Dendritic cell treated with granulocyte-macrophage colony-stimulating factor and Interleukin-4, amounts not matched to agents 40 ng/mL and 50 ng/mL, for 4 days (primary cell): ENCODE measurements at regions of chr7 and their contacts with region 1.

Region 1: DNA sequence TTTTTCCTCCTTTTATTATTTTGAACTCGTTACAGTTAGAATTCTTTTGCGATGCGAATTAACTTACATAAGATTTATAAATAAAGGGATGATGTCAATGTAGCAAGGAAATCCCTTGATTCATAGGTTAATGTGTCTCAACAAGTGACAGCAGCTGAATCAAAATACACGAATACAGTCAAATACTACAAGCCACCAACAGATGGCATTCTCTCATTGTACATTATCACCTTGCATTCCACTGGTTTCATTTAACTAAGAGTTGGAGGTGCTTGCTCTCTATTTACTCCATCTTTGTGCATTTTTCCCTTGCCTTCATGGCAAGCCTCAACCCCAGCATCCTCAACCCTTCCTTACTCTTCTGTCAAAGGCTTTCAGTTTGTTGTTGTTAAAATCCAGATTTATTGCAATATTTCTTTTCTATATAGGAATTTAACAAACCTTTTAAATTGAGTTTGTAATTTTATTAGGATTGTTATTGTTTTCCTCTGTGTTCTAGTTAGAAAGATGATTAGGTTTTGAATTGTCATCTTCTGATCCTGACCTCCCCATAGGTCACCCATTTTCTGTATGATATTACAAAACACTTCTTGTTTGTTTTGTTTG is 78.3 kb downstream of the SLC25A40 start:
- H3K4me3 Mint-ChIP-seq: no peak overlapping the region
- H3K27ac Mint-ChIP-seq: no peak overlapping the region
- H3K4me1 Mint-ChIP-seq: no peaks in the 10 kb centered on the region
- H3K27me3 Mint-ChIP-seq: no peaks in the 10 kb centered on the region

Region 2: DNA sequence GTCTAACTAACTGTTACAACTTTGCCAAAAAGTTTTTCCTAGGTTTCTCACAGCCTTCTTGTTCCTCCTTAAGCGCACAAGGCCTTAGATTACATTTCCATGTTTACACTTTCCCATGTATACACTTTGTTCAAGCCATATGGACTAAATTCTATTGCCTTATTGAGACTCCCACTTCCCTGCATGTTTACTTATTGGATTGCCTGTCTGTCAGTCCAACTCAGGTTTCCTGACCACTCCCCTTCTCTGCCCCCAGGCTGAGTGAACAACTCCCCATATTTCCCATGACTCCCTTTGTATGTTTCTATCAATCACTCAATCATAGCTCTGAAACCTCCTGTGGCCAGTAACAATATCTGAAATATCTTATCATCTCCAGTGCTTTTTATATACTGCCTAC is 35.2 kb after region 1 on chr7:
- intact Hi-C with region 1: no loop called
- H3K4me3 Mint-ChIP-seq: no peak overlapping the region
- H3K27ac Mint-ChIP-seq: no peak overlapping the region
- H3K4me1 Mint-ChIP-seq: no peaks in the 10 kb centered on the region
- H3K27me3 Mint-ChIP-seq: no peaks in the 10 kb centered on the region

Region 3: DNA sequence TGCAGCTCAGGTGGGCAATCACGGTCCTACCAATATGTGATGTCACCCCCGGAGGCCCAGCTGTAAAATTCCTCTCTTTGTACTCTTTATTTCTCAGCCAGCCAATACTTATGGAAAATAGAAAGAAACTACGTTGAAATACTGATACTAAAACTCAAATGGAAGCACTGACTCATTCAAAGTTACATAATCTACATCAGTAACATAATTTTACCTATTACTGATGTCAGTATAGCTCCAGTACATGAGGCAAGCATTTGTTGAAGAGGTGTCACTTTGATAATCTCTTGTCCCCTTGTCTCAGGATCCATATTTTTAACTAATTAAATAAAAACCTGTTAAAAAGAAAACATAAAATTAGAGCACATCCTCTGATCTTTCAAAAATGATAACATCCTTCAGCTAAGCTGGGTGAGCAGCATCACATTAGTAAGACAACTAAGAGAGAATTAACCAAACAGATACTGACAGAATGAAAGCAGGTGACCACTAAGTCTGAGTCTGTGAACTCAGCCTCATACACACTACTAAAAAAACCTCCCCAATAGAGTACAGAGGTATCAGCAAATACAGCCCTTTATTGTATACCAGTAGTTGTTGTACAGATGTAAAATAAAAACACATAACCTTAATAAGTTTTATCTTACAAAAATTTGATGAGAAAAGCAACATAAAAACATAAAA is 60.7 kb after region 1 on chr7:
- intact Hi-C with region 1: no loop called
- H3K4me3 Mint-ChIP-seq: no peak overlapping the region
- H3K27ac Mint-ChIP-seq: peak overlapping the region; percentile 43
- H3K4me1 Mint-ChIP-seq: peaks cover 35% of the 10 kb centered on the region
- H3K27me3 Mint-ChIP-seq: no peaks in the 10 kb centered on the region

Region 4: DNA sequence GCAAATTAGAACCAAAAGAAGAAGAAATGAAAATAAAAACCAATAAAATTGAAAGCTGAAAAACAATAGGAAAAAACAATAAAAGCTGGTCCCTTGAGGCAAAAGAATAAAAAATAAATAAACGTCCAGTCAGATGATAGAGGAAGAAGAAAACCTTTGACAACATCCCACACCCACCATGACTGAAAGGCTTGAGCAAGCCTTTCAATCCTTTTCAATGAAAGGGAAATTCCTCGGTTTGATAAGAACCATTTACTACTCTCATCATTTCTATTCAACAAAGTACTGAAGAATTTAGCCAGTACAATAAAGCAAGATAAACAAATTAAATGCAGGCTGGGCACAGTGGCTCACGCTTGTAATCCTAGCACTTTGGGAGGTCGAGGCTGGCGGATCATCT is 74.4 kb after region 1 on chr7:
- intact Hi-C with region 1: no loop called
- H3K4me3 Mint-ChIP-seq: no peak overlapping the region
- H3K27ac Mint-ChIP-seq: peak overlapping the region; percentile 100
- H3K4me1 Mint-ChIP-seq: peaks cover 65% of the 10 kb centered on the region
- H3K27me3 Mint-ChIP-seq: no peaks in the 10 kb centered on the region

Region 5: GRCh38 chr7:88111136-88111743 is 313.3 kb after region 1 on chr7:
- intact Hi-C with region 1: loop called (anchors 5 kb)
- H3K4me3 Mint-ChIP-seq: no peak overlapping the region
- H3K27ac Mint-ChIP-seq: no peak overlapping the region
- H3K4me1 Mint-ChIP-seq: peaks cover 7% of the 10 kb centered on the region
- H3K27me3 Mint-ChIP-seq: no peaks in the 10 kb centered on the region

Region 6: GRCh38 chr7:88647825-88648224 is 849.9 kb after region 1 on chr7:
- intact Hi-C with region 1: no loop called
- H3K4me3 Mint-ChIP-seq: no peak overlapping the region
- H3K27ac Mint-ChIP-seq: no peak overlapping the region
- H3K4me1 Mint-ChIP-seq: no peaks in the 10 kb centered on the region
- H3K27me3 Mint-ChIP-seq: no peaks in the 10 kb centered on the region